ENCODE measurements at regions of chr2 and their contacts with region 1.

Region 1: DNA sequence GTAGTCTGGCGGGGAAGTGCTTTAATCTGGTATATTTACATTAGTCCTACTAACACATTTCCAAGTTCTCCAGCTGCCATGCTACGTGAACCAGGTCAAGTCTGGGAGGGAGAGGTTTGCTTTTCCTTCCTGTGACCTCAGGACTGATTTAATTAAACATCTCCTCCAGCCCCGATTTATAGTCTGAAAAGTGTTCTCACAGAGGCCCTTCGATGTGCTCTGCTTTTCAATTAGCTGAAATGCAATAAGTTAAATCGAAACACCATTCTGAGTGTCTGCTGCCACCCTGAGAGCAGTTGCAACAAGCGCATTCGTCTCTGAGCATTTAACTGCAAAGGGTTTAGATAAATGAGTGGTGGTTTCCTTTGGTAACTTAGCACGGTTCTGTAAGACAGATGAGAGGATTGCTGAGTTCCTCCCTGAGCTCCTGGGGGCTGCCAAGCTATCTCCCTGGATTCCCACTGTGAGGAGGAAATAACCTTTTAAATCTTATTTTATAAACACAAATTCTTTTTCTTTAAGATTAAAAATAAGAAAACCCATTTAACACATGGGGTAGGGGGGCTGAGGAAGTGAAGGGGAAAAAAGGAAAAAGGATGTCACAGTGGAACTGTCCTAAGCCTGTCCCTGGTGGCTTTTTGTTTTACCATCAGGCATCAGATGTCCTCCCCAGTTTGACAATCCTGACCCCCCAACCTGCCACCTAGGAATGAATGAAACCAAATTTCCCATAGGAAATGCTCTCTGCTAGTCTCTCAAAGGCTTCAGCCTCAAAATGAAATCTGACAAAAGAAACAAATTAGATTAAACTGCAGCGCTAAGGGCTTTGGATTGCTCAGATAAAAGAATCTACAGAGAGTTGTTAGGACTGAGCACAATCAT is 56.5 kb upstream of the CREB1 start:
- DNase-seq: peak; percentile 79
- H3K4me3 Mint-ChIP-seq: no peak overlapping the region
- H3K27ac Mint-ChIP-seq: no peak overlapping the region
- H3K4me1 Mint-ChIP-seq: peaks cover 18% of the 10 kb centered on the region
- H3K27me3 Mint-ChIP-seq: no peaks in the 10 kb centered on the region

Region 2: DNA sequence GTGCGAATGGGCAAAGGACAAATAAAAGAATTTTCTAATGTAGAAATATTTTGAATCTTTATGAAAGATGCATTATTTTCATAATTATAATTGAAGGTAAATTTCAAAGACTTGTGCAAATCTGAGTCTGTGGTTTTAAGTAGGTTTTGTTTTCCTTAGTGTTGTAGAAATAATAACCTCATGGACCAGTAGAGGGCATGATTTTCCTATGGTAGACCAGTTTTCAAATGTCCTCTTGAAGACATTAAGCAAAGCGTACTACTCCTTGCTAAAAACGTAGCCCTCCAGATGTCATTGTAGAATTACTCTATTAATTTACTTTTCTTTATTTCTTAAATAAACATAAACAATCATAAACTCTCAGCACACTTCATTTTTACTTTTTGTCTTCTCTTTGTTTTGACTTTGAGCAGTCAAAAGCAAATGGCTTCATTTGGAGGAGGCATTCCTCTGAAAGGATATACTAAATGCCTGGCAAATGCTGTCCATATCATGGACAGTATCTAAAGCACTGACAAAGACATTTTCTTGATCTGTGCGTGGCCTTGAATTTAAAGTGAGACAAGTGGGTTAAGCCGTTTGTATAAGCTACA is 916.8 kb before region 1 on chr2:
- CTCF ChIA-PET with region 1: interaction called, 3 read pairs
- intact Hi-C with region 1: loop called (anchors 1 kb)
- DNase-seq: no peak
- H3K4me3 Mint-ChIP-seq: no peak overlapping the region
- H3K27ac Mint-ChIP-seq: no peak overlapping the region
- H3K4me1 Mint-ChIP-seq: peaks cover 13% of the 10 kb centered on the region
- H3K27me3 Mint-ChIP-seq: peaks cover 4% of the 10 kb centered on the region

Region 3: GRCh38 chr2:206800506-206801417 is 672.5 kb before region 1 on chr2:
- CTCF ChIA-PET with region 1: interaction called, 6 read pairs
- intact Hi-C with region 1: loop called (anchors 1 kb)
- DNase-seq: peak; percentile 70
- H3K4me3 Mint-ChIP-seq: no peak overlapping the region
- H3K27ac Mint-ChIP-seq: no peak overlapping the region
- H3K4me1 Mint-ChIP-seq: peaks cover 31% of the 10 kb centered on the region
- H3K27me3 Mint-ChIP-seq: no peaks in the 10 kb centered on the region

Region 4: GRCh38 chr2:207143215-207144172 is 329.8 kb before region 1 on chr2:
- CTCF ChIA-PET with region 1: interaction called, 5 read pairs
- intact Hi-C with region 1: loop called (anchors 2 kb)
- DNase-seq: peak; percentile 78
- H3K4me3 Mint-ChIP-seq: peak overlapping the region; percentile 64
- H3K27ac Mint-ChIP-seq: peak overlapping the region; percentile 92
- H3K4me1 Mint-ChIP-seq: peaks cover 68% of the 10 kb centered on the region
- H3K27me3 Mint-ChIP-seq: no peaks in the 10 kb centered on the region

Region 5: DNA sequence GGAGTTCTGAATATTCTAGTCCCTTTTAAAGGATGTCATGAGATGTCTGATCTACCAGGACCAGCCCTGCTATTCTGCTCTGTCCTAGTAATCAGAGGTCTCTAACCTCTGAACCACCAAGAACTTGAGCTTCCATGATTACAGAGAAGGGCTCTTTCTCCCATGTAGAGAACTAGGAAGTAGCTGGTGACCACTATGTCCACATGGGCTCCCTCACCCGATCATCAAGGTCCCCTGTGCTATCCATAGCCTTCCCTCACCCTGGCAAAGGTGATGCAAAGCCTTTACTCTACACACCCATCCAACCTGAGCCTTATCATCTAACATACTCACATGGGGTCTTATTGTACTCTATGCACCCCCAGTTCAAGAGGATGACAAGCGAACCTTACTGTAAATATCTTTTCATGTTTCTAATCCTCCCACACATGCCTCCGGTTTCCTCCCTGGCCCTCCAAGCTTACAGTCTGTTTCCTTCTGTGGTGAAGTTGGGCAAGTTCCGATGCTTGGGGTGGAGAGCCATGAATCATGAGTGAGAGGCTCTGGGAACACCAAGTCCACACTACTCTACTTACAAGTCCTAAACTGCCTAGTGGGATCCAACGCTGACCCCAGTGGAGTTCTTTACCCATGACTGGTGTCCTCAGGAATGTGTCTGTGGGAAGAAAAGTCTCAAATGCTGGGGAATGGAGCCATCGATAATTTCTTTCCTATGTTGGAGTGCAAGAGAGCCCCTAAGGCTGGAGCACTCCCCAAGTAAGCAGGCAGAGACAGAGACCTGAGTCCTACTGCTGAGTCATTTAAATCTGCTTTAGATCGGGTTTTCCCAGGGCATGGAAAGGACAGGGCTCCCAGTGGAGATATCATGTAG is 234.2 kb before region 1 on chr2:
- CTCF ChIA-PET with region 1: interaction called, 5 read pairs
- intact Hi-C with region 1: loop called (anchors 5 kb)
- DNase-seq: peak; percentile 73
- H3K4me3 Mint-ChIP-seq: no peak overlapping the region
- H3K27ac Mint-ChIP-seq: peak overlapping the region; percentile 2
- H3K4me1 Mint-ChIP-seq: peaks cover 30% of the 10 kb centered on the region
- H3K27me3 Mint-ChIP-seq: no peaks in the 10 kb centered on the region

Region 6: DNA sequence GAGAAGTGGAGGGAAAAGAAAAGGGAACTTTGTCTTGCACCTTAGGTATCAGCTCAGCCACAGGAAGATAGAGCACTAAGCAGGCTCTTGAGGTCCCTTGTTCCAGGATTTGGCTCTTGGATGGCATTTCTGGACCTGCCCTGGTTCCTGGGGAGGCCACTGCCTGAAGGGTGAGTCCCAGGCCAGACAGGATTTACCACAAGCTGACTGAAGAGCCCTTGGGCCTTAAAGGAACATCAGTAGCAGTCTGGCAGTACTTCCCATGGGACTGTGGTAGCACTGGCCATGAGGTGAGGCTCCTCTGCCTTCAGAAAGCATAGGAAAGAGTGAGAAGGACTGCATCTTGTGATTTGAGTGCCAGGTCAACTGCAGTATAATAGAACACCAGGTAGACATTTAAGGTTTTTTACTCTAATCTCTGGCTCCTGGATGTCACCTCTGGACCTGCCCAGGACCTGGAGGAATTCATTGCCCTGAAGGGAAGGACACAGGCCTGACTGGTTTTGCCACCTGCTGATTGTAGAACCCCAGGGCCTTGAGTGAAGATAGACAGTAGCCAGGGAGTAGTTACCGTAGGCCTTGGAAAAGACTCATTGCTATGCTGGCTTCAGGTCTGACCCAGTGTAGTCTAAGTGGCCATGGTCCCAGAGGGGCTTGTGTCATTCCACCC is 98.0 kb before region 1 on chr2:
- CTCF ChIA-PET with region 1: no interaction called
- intact Hi-C with region 1: no loop called
- DNase-seq: no peak
- H3K4me3 Mint-ChIP-seq: no peak overlapping the region
- H3K27ac Mint-ChIP-seq: no peak overlapping the region
- H3K4me1 Mint-ChIP-seq: no peaks in the 10 kb centered on the region
- H3K27me3 Mint-ChIP-seq: no peaks in the 10 kb centered on the region

Region 7: GRCh38 chr2:207490441-207490840 is 17.2 kb after region 1 on chr2:
- CTCF ChIA-PET with region 1: no interaction called
- intact Hi-C with region 1: no loop called
- DNase-seq: no peak
- H3K4me3 Mint-ChIP-seq: no peak overlapping the region
- H3K27ac Mint-ChIP-seq: no peak overlapping the region
- H3K4me1 Mint-ChIP-seq: peaks cover 6% of the 10 kb centered on the region
- H3K27me3 Mint-ChIP-seq: no peaks in the 10 kb centered on the region

Region 8: DNA sequence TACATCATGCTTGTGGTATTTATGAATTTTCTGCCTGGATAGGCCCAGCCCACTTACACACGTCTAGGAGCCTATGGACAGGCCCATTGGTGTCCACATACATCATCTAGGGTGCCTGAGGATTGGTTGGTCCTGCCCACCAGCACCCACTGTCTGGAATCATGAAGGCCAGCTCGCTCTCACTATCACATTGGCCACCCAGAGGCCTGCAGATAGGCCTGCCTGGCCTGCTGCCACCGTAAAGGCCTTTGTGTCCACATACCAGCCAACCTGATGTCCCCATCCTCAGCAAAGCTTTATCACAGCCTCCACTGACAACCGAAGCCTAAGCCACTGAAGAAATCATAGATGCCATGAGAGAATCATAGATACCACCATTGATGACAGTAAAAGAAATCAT is 111.7 kb after region 1 on chr2:
- CTCF ChIA-PET with region 1: no interaction called
- intact Hi-C with region 1: no loop called
- DNase-seq: no peak
- H3K4me3 Mint-ChIP-seq: no peak overlapping the region
- H3K27ac Mint-ChIP-seq: no peak overlapping the region
- H3K4me1 Mint-ChIP-seq: peaks cover 9% of the 10 kb centered on the region
- H3K27me3 Mint-ChIP-seq: no peaks in the 10 kb centered on the region

Region 9: DNA sequence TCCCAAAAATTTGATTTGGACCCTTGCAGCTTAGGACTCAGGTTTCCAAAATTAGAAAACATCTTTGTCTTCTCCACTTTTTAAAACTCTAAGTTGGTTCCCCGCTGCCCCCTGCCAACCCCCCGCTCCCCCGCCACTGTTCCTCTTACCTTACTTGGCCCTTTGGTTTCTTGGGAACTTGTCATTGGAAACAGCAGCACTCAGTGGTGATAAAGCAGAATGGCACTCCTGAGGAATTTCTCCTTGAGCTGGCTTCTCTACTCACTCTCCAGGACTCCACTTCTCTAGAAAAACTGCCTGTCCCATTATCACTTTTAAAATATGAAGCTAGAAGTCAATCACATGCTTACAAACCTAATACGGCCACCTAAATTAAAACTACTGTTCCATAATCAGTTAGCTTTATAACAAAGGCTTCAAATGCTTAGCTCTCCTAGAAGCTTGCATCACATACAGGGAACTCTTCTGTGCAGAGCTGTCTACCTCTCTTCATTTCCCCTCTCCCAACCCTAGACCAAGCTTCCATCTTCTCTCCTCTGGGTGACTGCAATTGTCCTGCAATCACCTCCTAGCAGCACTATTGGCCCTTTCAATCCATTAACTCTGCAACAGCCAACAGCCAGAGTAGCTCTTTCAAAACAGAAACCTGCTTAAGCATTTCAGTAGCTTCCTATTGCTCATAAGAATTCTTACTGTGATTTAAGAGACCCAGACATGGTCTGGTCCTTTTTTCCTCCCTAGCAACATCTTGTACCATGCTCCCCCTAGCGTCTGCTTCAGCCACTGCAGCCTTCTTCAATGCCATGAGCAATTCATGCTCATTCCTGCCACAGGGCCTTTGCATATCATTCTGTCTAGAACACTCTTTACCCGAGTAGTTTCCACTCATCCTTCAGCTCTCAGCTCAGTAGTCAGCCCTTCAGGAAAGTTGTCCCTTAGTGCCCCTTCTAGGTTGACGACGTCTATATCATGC is 567.2 kb after region 1 on chr2:
- CTCF ChIA-PET with region 1: no interaction called
- intact Hi-C with region 1: loop called (anchors 5 kb)
- DNase-seq: peak; percentile 93
- H3K4me3 Mint-ChIP-seq: no peak overlapping the region
- H3K27ac Mint-ChIP-seq: no peak overlapping the region
- H3K4me1 Mint-ChIP-seq: peaks cover 3% of the 10 kb centered on the region
- H3K27me3 Mint-ChIP-seq: peaks cover 2% of the 10 kb centered on the region

Measured in activated naive CD4-positive, alpha-beta T cell treated with anti-CD3 and anti-CD28 coated beads for 36 hours (primary cell).